ENCODE measurements at regions of chr19 and their contacts with region 1.

Region 1: GRCh38 chr19:40836754-40837429 is 13.4 kb downstream of the CYP2A6 start:
- DNase-seq: no peak
- ATAC-seq: no peak
- H3K4me3 ChIP-seq: no peak overlapping the region
- H3K4me3 Mint-ChIP-seq: no peak overlapping the region
- H3K27ac ChIP-seq: no peak overlapping the region
- H3K27ac Mint-ChIP-seq: no peak overlapping the region
- H3K4me1 ChIP-seq: peaks cover 5% of the 10 kb centered on the region
- H3K4me1 Mint-ChIP-seq: peaks cover 19% of the 10 kb centered on the region
- H3K27me3 ChIP-seq: no peaks in the 10 kb centered on the region
- H3K27me3 Mint-ChIP-seq: no peaks in the 10 kb centered on the region
- CTCF ChIP-seq: no peak

Region 2: DNA sequence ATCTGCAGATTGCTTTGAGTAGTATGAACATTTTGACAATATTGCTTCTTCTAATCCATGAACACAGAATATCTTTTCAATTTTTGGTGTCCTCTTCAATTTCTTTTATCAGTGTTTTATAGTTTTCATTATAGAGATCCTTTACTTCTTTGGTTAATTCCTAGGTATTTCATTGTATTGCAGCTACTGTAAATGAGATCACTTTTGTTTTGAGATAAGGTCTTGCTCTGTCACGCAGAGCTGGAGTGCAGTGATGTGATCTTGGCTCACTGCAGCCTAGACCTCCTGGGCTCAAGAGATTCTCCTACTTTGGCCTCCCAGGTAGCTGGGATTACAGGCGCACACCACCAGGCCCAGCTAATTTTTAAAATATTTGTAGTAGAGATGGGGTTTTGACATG is 35.3 kb after region 1 on chr19:
- CTCF ChIA-PET with region 1: no interaction called
- POLR2A ChIA-PET with region 1: interaction called, 3 read pairs
- intact Hi-C with region 1: loop called (anchors 5 kb)
- DNase-seq: no peak
- ATAC-seq: no peak
- H3K4me3 ChIP-seq: no peak overlapping the region
- H3K4me3 Mint-ChIP-seq: no peak overlapping the region
- H3K27ac ChIP-seq: no peak overlapping the region
- H3K27ac Mint-ChIP-seq: no peak overlapping the region
- H3K4me1 ChIP-seq: peaks cover 7% of the 10 kb centered on the region
- H3K4me1 Mint-ChIP-seq: peaks cover 21% of the 10 kb centered on the region
- H3K27me3 ChIP-seq: peaks cover 0 to 3% of the 10 kb centered on the region in 2 experiments
- H3K27me3 Mint-ChIP-seq: peaks cover 45% of the 10 kb centered on the region
- CTCF ChIP-seq: no peak